ENCODE measurements at regions of chr13 and their contacts with region 1.

Region 1: GRCh38 chr13:29472332-29472961 is 123.0 kb downstream of the SLC7A1 start:
- DNase-seq: peak; percentile 63
- H3K4me3 Mint-ChIP-seq: no peak overlapping the region
- H3K27ac Mint-ChIP-seq: no peak overlapping the region
- H3K4me1 Mint-ChIP-seq: no peaks in the 10 kb centered on the region
- H3K27me3 Mint-ChIP-seq: peaks cover 3% of the 10 kb centered on the region

Region 2: DNA sequence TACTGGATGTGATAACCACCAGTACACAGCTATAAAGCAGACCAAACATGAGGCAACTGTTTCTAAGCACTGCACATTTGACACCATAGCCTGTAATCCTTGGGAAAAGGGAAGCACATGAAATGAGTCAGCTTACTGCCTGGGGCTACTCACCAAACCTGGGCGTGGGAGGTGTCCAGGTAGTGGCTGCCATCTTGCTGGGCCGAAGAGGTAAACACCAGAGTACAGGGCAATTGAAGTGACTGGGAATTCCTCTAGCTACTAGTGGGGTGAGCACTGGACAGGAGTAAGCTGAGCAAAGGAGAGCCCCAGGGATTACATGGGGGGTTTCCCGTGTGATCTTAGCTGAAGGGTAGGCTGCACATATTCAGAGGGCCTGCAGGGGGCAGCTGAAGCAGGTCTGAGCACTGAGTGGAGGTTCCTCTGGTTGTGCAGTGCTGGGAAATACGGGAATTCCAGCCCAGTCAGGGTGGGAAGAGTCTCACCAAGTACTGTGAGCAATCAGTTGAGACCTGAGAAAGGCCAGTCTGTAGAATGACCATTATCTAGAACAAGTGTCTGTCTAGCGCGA is 17.5 kb before region 1 on chr13:
- CTCF ChIA-PET with region 1: interaction called, 14 read pairs
- POLR2A ChIA-PET with region 1: no interaction called
- intact Hi-C with region 1: no loop called
- DNase-seq: peak; percentile 12
- H3K4me3 Mint-ChIP-seq: no peak overlapping the region
- H3K27ac Mint-ChIP-seq: no peak overlapping the region
- H3K4me1 Mint-ChIP-seq: no peaks in the 10 kb centered on the region
- H3K27me3 Mint-ChIP-seq: peaks cover 11% of the 10 kb centered on the region

Region 3: DNA sequence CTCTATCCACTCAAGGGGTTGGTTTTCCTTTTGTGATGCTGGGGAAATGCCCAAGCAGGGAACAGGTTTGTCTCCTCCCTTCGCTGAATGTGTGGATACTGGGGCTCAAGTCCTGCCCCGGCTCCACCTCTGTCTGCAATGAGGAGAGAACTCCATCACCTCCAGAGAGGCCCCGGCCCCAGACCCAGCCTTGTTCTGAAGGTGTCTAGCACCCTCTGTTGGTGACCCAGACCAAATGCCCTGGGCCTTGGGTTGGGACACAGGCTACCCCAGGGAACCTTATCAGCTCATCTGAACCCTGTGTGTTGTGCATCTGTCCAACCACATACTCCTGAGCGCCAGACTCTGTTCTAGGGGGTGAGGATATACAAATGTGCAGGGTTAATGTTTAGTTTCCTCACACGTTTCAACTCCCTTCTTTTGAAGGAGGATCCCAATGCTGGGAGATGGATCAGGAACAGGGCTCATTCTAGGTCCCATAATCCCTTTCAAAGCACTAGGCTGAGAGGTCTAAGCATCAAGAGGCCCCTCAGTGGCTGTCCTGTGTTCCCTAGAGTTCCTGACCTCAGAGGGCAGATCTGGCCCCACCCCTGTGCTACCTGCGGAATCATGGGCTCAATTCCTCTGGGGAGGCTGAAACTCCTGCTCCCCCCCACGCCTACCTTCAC is 235.6 kb after region 1 on chr13:
- CTCF ChIA-PET with region 1: interaction called, 7 read pairs
- POLR2A ChIA-PET with region 1: no interaction called
- intact Hi-C with region 1: loop called (anchors 1 kb)
- DNase-seq: peak; percentile 63
- H3K4me3 Mint-ChIP-seq: no peak overlapping the region
- H3K27ac Mint-ChIP-seq: no peak overlapping the region
- H3K4me1 Mint-ChIP-seq: no peaks in the 10 kb centered on the region
- H3K27me3 Mint-ChIP-seq: peaks cover 6% of the 10 kb centered on the region

Measured in activated CD4-positive, alpha-beta memory T cell treated with anti-CD3 and anti-CD28 coated beads for 36 hours (primary cell).